PC-9 (cell line): ENCODE measurements at regions of chr2 and their contacts with region 1.

Region 1: DNA sequence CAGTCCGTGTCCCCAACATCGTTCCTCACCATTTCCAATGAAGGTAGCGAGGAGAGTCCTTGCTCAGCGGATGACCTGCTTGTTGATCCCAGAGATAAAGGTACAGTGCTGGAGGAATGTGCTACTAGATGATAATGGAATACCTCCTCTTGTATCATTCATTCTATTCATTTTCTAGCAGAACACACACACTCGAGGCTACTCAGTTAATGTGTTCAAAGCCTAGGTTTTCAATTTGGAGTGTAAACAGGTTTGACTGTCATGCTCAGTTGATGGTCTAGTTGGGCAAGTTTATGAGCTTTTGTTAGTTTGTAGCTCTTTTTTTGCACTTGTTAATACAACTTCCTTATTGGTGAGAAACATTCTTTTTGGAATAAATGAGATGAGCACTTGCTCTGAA is 114.2 kb downstream of the ICA1L start:
- DNase-seq: no peak
- H3K4me3 ChIP-seq: no peak overlapping the region
- H3K27ac ChIP-seq: no peak overlapping the region
- H3K4me1 ChIP-seq: no peaks in the 10 kb centered on the region
- H3K27me3 ChIP-seq: no peaks in the 10 kb centered on the region
- CTCF ChIP-seq: no peak

Region 2: DNA sequence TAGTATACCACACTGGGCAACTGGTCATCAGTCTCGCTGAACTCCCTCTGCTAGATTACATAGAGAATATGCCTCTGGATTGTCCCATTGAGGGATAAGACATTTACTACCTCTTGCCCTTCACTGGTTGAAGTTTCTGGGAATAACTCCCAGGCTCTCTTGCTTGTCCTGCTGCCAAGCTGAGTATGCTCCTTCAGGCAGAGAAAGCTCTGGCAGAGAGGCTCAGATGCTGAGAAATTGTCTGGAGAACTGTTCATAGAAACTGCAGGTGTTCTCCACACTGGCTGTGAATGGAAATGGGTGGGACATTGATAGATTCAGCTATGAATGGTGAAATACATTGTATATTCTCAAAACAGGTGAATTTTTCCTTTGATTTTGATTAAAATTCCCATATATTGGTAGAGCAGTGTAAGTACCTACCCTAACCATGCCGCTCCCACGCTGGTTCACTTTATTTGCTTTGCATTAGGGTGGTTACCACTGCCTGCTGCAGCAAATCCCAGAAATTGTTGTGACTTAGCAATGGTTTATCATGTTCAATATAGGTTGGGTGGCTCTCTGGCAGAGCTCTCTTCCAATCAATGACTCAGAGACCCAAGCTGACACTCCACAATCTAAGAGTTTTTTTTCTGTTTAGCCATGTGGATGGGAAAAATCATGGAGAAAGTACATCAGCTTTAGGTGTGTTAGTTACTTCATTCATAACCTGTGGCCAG is 85.9 kb before region 1 on chr2:
- CTCF ChIA-PET with region 1: no interaction called
- POLR2A ChIA-PET with region 1: no interaction called
- intact Hi-C with region 1: no loop called
- DNase-seq: no peak
- H3K4me3 ChIP-seq: no peak overlapping the region
- H3K27ac ChIP-seq: no peak overlapping the region
- H3K4me1 ChIP-seq: no peaks in the 10 kb centered on the region
- H3K27me3 ChIP-seq: no peaks in the 10 kb centered on the region
- CTCF ChIP-seq: no peak

Region 3: DNA sequence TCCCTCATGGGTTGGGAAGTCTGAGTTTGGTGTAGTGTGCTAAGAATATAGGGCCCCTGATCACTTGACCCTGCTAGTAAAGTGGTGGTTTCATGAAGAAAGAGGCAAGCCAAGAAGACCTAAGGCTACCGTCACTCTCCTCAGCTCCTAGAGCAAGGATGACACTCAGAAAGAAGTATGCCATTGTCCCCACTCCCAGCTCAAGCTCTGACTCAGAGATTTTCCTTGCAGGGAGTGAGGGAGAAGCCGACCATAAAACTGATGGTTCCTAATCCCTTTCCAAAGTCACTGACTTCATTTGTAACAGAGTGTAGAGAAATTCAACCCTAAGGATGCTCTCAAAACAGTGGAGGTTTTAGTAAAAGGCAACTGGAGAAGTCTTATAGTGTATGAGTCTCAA is 33.3 kb after region 1 on chr2:
- CTCF ChIA-PET with region 1: no interaction called
- POLR2A ChIA-PET with region 1: interaction called, 38 read pairs
- intact Hi-C with region 1: no loop called
- DNase-seq: no peak
- H3K4me3 ChIP-seq: no peak overlapping the region
- H3K27ac ChIP-seq: no peak overlapping the region
- H3K4me1 ChIP-seq: no peaks in the 10 kb centered on the region
- H3K27me3 ChIP-seq: no peaks in the 10 kb centered on the region
- CTCF ChIP-seq: no peak

Region 4: GRCh38 chr2:203310688-203311448 is 553.5 kb after region 1 on chr2:
- CTCF ChIA-PET with region 1: no interaction called
- POLR2A ChIA-PET with region 1: no interaction called
- intact Hi-C with region 1: no loop called
- DNase-seq: no peak
- H3K4me3 ChIP-seq: no peak overlapping the region
- H3K27ac ChIP-seq: no peak overlapping the region
- H3K4me1 ChIP-seq: no peaks in the 10 kb centered on the region
- H3K27me3 ChIP-seq: no peaks in the 10 kb centered on the region
- CTCF ChIP-seq: no peak